A673 (cell line): ENCODE measurements at regions of chr1 and their contacts with region 1.

Region 1: DNA sequence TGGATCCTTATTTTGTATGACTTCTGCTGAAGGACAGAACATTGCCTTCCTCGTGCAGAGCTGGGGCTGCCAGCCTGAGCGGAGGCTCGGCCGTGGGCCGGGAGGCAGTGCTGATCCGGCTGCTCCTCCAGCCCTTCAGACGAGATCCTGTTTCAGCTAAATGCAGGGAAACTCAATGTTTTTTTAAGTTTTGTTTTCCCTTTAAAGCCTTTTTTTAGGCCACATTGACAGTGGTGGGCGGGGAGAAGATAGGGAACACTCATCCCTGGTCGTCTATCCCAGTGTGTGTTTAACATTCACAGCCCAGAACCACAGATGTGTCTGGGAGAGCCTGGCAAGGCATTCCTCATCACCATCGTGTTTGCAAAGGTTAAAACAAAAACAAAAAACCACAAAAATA is 27.5 kb upstream of the KDM4A start:
- DNase-seq: no peak
- H3K4me3 ChIP-seq: no peak overlapping the region
- H3K27ac ChIP-seq: no peak overlapping the region
- H3K4me1 ChIP-seq: no peaks in the 10 kb centered on the region
- H3K27me3 ChIP-seq: no peaks in the 10 kb centered on the region
- CTCF ChIP-seq: no peak

Region 2: GRCh38 chr1:43610339-43610738 is 12.1 kb before region 1 on chr1:
- CTCF ChIA-PET with region 1: no interaction called
- POLR2A ChIA-PET with region 1: interaction called, 11 read pairs
- intact Hi-C with region 1: no loop called
- DNase-seq: no peak
- H3K4me3 ChIP-seq: no peak overlapping the region
- H3K27ac ChIP-seq: no peak overlapping the region
- H3K4me1 ChIP-seq: no peaks in the 10 kb centered on the region
- H3K27me3 ChIP-seq: no peaks in the 10 kb centered on the region
- CTCF ChIP-seq: no peak